A549 (cell line): ENCODE measurements at regions of chr13 and their contacts with region 1.

Region 1: GRCh38 chr13:27826379-27827353 is 34.4 kb downstream of the GSX1 start:
- DNase-seq: peak; percentile 66 to 86
- ATAC-seq: peak; percentile 95
- H3K4me3 ChIP-seq: peak overlapping the region; percentile 34
- H3K27ac ChIP-seq: peak overlapping the region; percentile 36 to 68; a peak in 2 of 6 replicates
- H3K4me1 ChIP-seq: no peaks in the 10 kb centered on the region
- CTCF ChIP-seq: peak; percentile 79
- EP300 ChIP-seq: no peak
- POLR2A ChIP-seq: no peak
- RAD21 ChIP-seq: peak; percentile 79 to 85

Region 2: DNA sequence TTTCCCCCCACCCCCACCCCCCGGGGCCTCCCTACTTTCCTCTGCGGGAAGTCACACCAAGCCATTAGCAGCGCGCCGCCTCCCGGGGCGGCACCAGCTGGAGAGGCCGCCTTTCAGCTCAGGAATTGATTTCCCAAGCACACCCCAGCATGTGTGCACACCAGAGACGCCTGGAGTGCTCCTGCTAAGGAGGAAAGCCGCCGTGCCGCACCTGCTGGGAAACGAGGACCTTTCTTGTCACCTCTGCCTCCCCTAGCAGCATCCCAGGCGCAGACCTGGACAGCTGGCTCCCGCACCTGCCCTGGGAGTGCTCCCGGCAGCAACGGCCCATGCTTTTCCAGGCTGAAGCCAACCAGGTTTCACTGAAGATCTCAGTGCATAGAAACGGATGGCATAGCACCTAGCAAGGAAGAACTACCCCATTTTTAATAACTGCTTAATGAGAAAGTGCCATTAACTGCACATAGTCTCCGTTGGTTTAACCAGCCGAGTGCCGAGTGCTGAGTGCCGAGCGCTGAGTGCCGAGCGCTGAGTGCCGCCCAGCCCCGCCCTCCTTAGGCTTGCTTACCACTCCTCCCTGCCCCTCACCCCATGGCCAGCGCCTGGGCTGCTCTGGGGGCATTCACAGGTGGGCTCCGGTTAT is 820.0 kb before region 1 on chr13:
- CTCF ChIA-PET with region 1: no interaction called
- POLR2A ChIA-PET with region 1: no interaction called
- DNase-seq: no peak
- ATAC-seq: peak; percentile 75 to 88
- H3K4me3 ChIP-seq: peak overlapping the region; percentile 32; the same call in 2 of the 3 replicates
- H3K27ac ChIP-seq: peak overlapping the region; percentile 44 to 67; a peak in 4 of 6 replicates
- H3K4me1 ChIP-seq: peaks cover 4% of the 10 kb centered on the region; the same call in 1 of the 3 replicates
- CTCF ChIP-seq: no peak
- EP300 ChIP-seq: no peak
- POLR2A ChIP-seq: no peak
- RAD21 ChIP-seq: no peak

Region 3: GRCh38 chr13:27362064-27362883 is 464.4 kb before region 1 on chr13:
- CTCF ChIA-PET with region 1: interaction called, 113 read pairs
- POLR2A ChIA-PET with region 1: no interaction called
- DNase-seq: peak; percentile 81
- ATAC-seq: peak; percentile 97 to 98
- H3K4me3 ChIP-seq: peak overlapping the region; percentile 42
- H3K27ac ChIP-seq: peak overlapping the region; percentile 53 to 82; a peak in 4 of 6 replicates
- H3K4me1 ChIP-seq: peaks cover 4% of the 10 kb centered on the region; the same call in 1 of the 3 replicates
- CTCF ChIP-seq: peak; percentile 73
- EP300 ChIP-seq: no peak
- POLR2A ChIP-seq: no peak
- RAD21 ChIP-seq: peak; percentile 80 to 85

Region 4: GRCh38 chr13:27406178-27406939 is 420.3 kb before region 1 on chr13:
- CTCF ChIA-PET with region 1: interaction called, 14 read pairs
- POLR2A ChIA-PET with region 1: no interaction called
- DNase-seq: peak; percentile 41 to 49
- ATAC-seq: peak; percentile 78; a peak in 5 of 6 replicates
- H3K4me3 ChIP-seq: no peak overlapping the region
- H3K27ac ChIP-seq: no peak overlapping the region
- H3K4me1 ChIP-seq: no peaks in the 10 kb centered on the region
- CTCF ChIP-seq: peak; percentile 46
- EP300 ChIP-seq: no peak
- POLR2A ChIP-seq: no peak
- RAD21 ChIP-seq: peak; percentile 46 to 50

Region 5: DNA sequence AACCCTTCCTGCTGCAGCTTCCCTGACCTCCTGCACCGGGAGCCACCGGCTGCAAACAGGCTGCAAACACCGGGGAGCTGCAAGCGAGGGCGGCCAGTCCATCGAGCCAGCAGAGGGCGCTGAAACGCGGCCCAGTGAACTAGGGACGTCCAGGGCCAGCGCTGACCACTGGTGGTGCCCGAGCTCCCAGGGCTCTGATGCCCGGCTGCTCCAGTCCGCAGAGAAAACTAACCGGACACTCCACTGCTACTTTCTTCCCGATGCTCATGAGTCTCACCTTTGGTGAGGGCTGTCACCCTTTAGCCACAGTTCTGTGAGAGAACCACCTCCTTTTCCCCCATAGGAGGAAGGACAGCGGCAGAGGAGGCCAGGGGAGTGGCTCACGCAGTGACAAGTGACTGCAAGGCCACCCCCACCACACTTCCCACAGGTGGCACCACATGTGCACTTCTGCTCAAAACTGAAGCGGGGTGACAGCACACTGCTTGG is 293.5 kb before region 1 on chr13:
- CTCF ChIA-PET with region 1: interaction called, 95 read pairs
- POLR2A ChIA-PET with region 1: interaction called, 3 read pairs
- DNase-seq: peak; percentile 41 to 76
- ATAC-seq: peak; percentile 99 to 100
- H3K4me3 ChIP-seq: peak overlapping the region; percentile 41
- H3K27ac ChIP-seq: no peak overlapping the region
- H3K4me1 ChIP-seq: no peaks in the 10 kb centered on the region
- CTCF ChIP-seq: peak; percentile 75
- EP300 ChIP-seq: no peak
- POLR2A ChIP-seq: no peak
- RAD21 ChIP-seq: peak; percentile 68 to 73

Region 6: GRCh38 chr13:27839809-27840467 is 13.3 kb after region 1 on chr13:
- CTCF ChIA-PET with region 1: interaction called, 17 read pairs
- POLR2A ChIA-PET with region 1: no interaction called
- DNase-seq: peak; percentile 12 to 48
- ATAC-seq: peak; percentile 54 to 71; a peak in 5 of 6 replicates
- H3K4me3 ChIP-seq: no peak overlapping the region
- H3K27ac ChIP-seq: peak overlapping the region; percentile 21 to 48; a peak in 1 of 6 replicates
- H3K4me1 ChIP-seq: 0 out of 3 replicates have a peak, but pooled peaks cover 7% of the 10 kb centered on the region
- CTCF ChIP-seq: no peak
- EP300 ChIP-seq: no peak
- POLR2A ChIP-seq: no peak
- RAD21 ChIP-seq: no peak

Region 7: GRCh38 chr13:27960362-27961226 is 133.9 kb after region 1 on chr13:
- CTCF ChIA-PET with region 1: interaction called, 132 read pairs
- POLR2A ChIA-PET with region 1: interaction called, 3 read pairs
- DNase-seq: peak; percentile 55 to 87
- ATAC-seq: peak; percentile 92
- H3K4me3 ChIP-seq: peak overlapping the region; percentile 58
- H3K27ac ChIP-seq: peak overlapping the region; percentile 64 to 86
- H3K4me1 ChIP-seq: peaks cover 17% of the 10 kb centered on the region
- CTCF ChIP-seq: peak; percentile 59
- EP300 ChIP-seq: no peak
- POLR2A ChIP-seq: no peak
- RAD21 ChIP-seq: peak; percentile 51 to 61; a peak in 4 of 5 replicates